PC-3 (cell line): ENCODE measurements at regions of chr10 and their contacts with region 1.

Region 1: GRCh38 chr10:73879296-73880173 is 5.2 kb upstream of the CAMK2G start:
- DNase-seq: peak; percentile 100
- ATAC-seq: peak; percentile 76
- H3K4me3 ChIP-seq: peak overlapping the region; percentile 8; the same call in 1 of the 2 replicates
- H3K27ac ChIP-seq: no peak overlapping the region
- H3K4me1 ChIP-seq: peaks cover 51% of the 10 kb centered on the region
- H3K27me3 ChIP-seq: no peaks in the 10 kb centered on the region
- CTCF ChIP-seq: peak; percentile 100

Region 2: DNA sequence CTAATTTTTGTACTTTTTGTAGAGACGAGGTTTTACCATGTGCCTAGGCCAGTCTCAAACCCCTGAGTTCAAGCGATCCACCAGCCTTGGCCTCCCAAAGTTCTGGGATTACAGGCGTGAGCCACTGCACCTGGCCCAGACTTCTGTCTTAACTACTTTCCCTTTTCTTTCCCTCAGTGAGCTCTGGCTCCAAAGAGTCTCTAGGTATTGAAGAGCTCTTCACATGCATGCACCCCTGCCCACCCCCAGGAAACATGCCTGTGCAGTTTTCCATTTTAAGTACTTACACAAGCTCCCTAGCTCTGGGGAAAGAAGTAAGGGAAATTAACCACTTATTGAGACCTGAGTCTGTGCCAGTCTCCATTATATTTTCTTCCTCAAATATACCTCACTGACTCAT is 240.2 kb before region 1 on chr10:
- CTCF ChIA-PET with region 1: no interaction called
- POLR2A ChIA-PET with region 1: no interaction called
- intact Hi-C with region 1: no loop called
- DNase-seq: no peak
- ATAC-seq: no peak
- H3K4me3 ChIP-seq: no peak overlapping the region
- H3K27ac ChIP-seq: no peak overlapping the region
- H3K4me1 ChIP-seq: no peaks in the 10 kb centered on the region
- H3K27me3 ChIP-seq: no peaks in the 10 kb centered on the region
- CTCF ChIP-seq: no peak

Region 3: DNA sequence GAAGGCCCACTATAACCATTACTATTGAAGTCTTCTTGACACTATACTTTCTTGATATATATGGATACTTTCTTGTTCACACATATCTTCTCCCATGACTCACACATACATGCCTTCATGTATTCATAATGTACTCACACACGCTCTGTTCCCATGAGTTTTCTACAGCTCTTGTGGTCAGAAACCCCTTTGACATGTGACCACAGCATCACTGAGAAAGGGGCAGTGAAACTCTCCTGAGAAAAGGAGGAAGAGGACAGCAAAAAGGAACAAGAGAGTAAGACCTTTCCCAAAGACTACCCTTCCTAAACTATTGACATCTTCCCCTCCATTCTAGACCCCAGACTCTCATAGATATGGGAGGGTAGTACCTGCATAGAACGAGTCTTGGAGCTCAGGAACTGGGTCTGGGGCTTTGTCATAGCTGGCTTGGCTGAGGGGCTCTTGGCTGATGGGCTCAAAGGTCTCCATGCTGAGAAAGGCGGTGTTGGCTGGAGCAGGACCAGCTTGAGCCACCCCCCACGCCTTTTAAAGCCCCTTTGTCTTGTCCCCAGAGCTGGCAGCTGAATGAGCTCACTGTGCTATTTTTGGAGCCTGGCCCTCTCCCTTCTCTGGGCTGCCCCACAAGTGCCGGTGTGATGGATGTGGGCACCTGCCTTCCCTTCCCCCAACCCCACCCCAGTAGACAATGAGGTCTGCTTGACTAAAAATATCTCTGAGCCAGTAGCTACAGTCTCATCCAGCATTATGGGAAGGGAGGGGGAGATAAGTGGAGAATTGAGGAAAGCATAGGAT is 228.8 kb before region 1 on chr10:
- CTCF ChIA-PET with region 1: interaction called, 7 read pairs
- POLR2A ChIA-PET with region 1: no interaction called
- intact Hi-C with region 1: loop called (anchors 5 kb)
- DNase-seq: peak; percentile 53
- ATAC-seq: no peak
- H3K4me3 ChIP-seq: no peak overlapping the region
- H3K27ac ChIP-seq: no peak overlapping the region
- H3K4me1 ChIP-seq: no peaks in the 10 kb centered on the region
- H3K27me3 ChIP-seq: no peaks in the 10 kb centered on the region
- CTCF ChIP-seq: no peak

Region 4: DNA sequence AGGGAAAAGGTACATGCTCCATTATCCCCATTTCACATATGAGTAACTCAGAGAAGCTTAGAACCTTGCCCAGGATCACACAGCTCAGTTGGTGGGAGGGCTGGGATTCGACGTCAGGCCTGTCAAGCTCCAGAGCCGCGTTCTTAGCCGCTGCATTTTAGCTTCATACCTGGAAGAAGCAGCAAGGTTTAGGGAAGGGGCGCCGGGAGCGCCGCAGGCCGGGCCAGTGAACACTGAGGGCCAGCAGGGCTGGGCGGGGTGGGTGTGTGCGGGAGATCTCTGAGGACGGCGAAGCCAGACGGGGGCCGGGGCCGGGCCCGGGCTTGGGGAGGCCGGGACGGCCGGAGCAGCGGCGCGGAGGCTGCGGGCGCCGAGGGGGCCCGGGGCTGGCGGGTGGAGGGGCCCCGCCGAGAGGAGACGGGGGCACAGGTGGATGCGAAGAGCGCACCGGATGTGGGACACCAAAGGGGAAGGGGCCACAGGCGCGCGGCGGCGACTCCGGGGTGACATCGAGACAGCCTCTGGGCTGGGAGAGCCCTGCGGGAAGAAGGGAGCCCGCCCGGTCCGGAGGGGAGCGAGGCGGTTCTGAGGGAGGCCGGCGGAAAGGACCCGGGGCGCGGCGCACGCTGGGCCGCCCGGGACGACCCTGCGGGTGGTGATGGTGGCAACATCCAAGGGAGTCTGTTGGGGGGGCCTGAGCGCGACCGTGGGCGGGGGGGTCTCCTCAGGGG is 68.6 kb before region 1 on chr10:
- CTCF ChIA-PET with region 1: interaction called, 4 read pairs
- POLR2A ChIA-PET with region 1: interaction called, 3 read pairs
- intact Hi-C with region 1: loop called (anchors 1 kb)
- DNase-seq: peak; percentile 68
- ATAC-seq: peak; percentile 42
- H3K4me3 ChIP-seq: peak overlapping the region; percentile 79
- H3K27ac ChIP-seq: peak overlapping the region; percentile 22
- H3K4me1 ChIP-seq: peaks cover 4% of the 10 kb centered on the region
- H3K27me3 ChIP-seq: no peaks in the 10 kb centered on the region
- CTCF ChIP-seq: no peak

Region 5: GRCh38 chr10:73827346-73828089 is 52.0 kb before region 1 on chr10:
- CTCF ChIA-PET with region 1: interaction called, 12 read pairs
- POLR2A ChIA-PET with region 1: no interaction called
- intact Hi-C with region 1: no loop called
- DNase-seq: peak; percentile 100
- ATAC-seq: peak; percentile 96
- H3K4me3 ChIP-seq: peak overlapping the region; percentile 7
- H3K27ac ChIP-seq: peak overlapping the region; percentile 54
- H3K4me1 ChIP-seq: peaks cover 21% of the 10 kb centered on the region
- H3K27me3 ChIP-seq: no peaks in the 10 kb centered on the region
- CTCF ChIP-seq: peak; percentile 30; the same call in 1 of the 2 replicates

Region 6: GRCh38 chr10:73848821-73849489 is 30.6 kb before region 1 on chr10:
- CTCF ChIA-PET with region 1: interaction called, 19 read pairs
- POLR2A ChIA-PET with region 1: no interaction called
- intact Hi-C with region 1: loop called (anchors 1 kb)
- DNase-seq: peak; percentile 100
- ATAC-seq: peak; percentile 96
- H3K4me3 ChIP-seq: no peak overlapping the region
- H3K27ac ChIP-seq: no peak overlapping the region
- H3K4me1 ChIP-seq: no peaks in the 10 kb centered on the region
- H3K27me3 ChIP-seq: no peaks in the 10 kb centered on the region
- CTCF ChIP-seq: peak; percentile 100

Region 7: DNA sequence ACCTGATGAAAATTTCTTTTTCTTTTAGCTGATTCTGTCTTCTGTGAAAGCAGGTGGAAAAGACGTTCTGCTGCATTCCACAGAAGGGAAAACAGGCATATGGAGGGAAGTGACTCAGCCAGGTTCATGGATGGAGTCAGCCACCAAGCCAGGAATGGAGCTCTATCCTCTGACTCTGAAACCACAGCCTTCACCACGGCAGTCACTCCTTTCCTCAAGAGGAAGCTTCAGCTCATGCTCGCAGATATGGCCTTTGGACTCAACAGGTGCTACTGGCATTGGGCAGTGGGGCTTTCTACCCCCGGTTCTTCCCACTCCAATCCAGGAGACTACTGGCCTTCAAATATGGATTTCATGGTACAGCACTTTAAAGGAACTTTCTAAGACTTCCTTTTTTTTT is 19.9 kb after region 1 on chr10:
- CTCF ChIA-PET with region 1: interaction called, 12 read pairs
- POLR2A ChIA-PET with region 1: no interaction called
- intact Hi-C with region 1: no loop called
- DNase-seq: peak; percentile 100
- ATAC-seq: peak; percentile 93
- H3K4me3 ChIP-seq: peak overlapping the region; percentile 8; the same call in 1 of the 2 replicates
- H3K27ac ChIP-seq: peak overlapping the region; percentile 78
- H3K4me1 ChIP-seq: peaks cover 54% of the 10 kb centered on the region
- H3K27me3 ChIP-seq: no peaks in the 10 kb centered on the region
- CTCF ChIP-seq: no peak

Region 8: GRCh38 chr10:74081192-74081803 is 201.8 kb after region 1 on chr10:
- CTCF ChIA-PET with region 1: interaction called, 12 read pairs
- POLR2A ChIA-PET with region 1: interaction called, 4 read pairs
- intact Hi-C with region 1: no loop called
- DNase-seq: peak; percentile 94
- ATAC-seq: peak; percentile 49
- H3K4me3 ChIP-seq: no peak overlapping the region
- H3K27ac ChIP-seq: no peak overlapping the region
- H3K4me1 ChIP-seq: peaks cover 43% of the 10 kb centered on the region
- H3K27me3 ChIP-seq: no peaks in the 10 kb centered on the region
- CTCF ChIP-seq: no peak